GM10248 (cell line): ENCODE measurements at regions of chr5 and their contacts with region 1.

Region 1: GRCh38 chr5:150458819-150459557 is 9.4 kb upstream of the RPS14 start:
- DNase-seq: peak; percentile 84
- CTCF ChIP-seq: peak; percentile 94

Region 2: GRCh38 chr5:150066901-150067396 is 392.0 kb before region 1 on chr5:
- CTCF ChIA-PET with region 1: no interaction called
- POLR2A ChIA-PET with region 1: no interaction called
- DNase-seq: no peak
- CTCF ChIP-seq: no peak

Region 3: GRCh38 chr5:150473673-150474358 is 14.8 kb after region 1 on chr5:
- CTCF ChIA-PET with region 1: interaction called, 20 read pairs
- POLR2A ChIA-PET with region 1: interaction called, 3 read pairs
- DNase-seq: no peak
- CTCF ChIP-seq: no peak

Region 4: GRCh38 chr5:150486402-150487198 is 27.6 kb after region 1 on chr5:
- CTCF ChIA-PET with region 1: interaction called, 45 read pairs
- POLR2A ChIA-PET with region 1: no interaction called
- DNase-seq: peak; percentile 60
- CTCF ChIP-seq: no peak

Region 5: GRCh38 chr5:150497274-150497988 is 38.4 kb after region 1 on chr5:
- CTCF ChIA-PET with region 1: interaction called, 45 read pairs
- POLR2A ChIA-PET with region 1: no interaction called
- DNase-seq: no peak
- CTCF ChIP-seq: no peak

Region 6: GRCh38 chr5:150517272-150518152 is 58.5 kb after region 1 on chr5:
- CTCF ChIA-PET with region 1: interaction called, 43 read pairs
- POLR2A ChIA-PET with region 1: interaction called, 4 read pairs
- DNase-seq: no peak
- CTCF ChIP-seq: no peak

Region 7: GRCh38 chr5:150523472-150524350 is 64.7 kb after region 1 on chr5:
- CTCF ChIA-PET with region 1: interaction called, 43 read pairs
- POLR2A ChIA-PET with region 1: interaction called, 4 read pairs
- DNase-seq: peak; percentile 75
- CTCF ChIP-seq: peak; percentile 44

Region 8: GRCh38 chr5:150544611-150545219 is 85.7 kb after region 1 on chr5:
- CTCF ChIA-PET with region 1: interaction called, 75 read pairs
- POLR2A ChIA-PET with region 1: no interaction called
- DNase-seq: peak; percentile 95
- CTCF ChIP-seq: peak; percentile 98